Naive thymus-derived CD4-positive, alpha-beta T cell (primary cell): ENCODE measurements at regions of chr1 and their contacts with region 1.

Region 1: DNA sequence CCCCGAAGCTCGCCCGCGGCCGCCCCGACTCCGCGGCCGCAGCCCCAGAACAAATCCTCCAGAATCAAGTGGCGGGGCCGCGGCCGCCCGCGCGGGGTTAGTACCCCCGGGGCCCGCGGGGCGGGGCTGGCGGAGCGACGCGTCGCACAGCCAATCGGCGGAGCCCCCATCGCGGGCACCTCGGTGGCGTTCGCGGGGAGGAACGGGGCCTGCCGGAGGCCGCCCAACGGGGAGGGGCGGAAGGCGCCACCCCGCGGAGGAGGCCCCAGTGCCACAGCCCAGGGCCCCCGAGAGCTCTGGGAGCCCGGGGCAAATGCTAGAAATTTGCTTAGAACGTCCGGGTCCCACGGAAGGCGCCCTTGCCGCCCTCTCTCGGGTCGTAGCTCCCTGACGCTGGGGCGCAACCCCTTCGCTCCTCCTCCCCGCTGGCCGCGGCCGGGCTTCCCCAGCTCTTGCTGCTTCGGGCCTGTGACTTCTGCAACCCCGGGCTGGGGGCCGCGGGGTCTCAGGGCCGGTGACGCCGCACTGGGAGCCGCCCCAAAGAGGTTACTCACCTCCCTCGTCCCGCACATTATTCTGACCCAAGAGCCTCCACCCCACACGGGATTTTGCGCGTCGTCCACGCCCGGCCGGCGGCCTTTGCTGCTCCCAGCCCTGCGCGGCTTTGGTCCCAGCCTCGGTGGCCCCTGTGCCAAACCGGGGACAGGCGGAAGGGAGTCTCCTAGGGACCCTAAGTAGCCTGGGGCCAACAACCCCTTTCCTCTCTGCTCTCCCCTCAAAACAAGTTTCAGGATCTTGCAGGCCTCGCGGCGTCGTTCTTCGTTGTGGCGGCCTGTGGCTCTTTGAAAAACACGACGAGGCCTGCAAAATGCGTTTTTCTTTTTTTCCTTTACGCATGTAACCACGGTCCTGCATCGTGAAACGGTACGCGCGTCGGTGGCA is at the start of gene RUNX3:
- DNase-seq: peak; percentile 87 to 94 (median 92)
- ATAC-seq: peak; percentile 90
- H3K4me3 ChIP-seq: peak within 1 kb of the TSS; percentile 91
- H3K4me3 Mint-ChIP-seq: peak within 1 kb of the TSS; percentile 85 to 98 (median 96)
- H3K27ac ChIP-seq: peak within 1 kb of the TSS; percentile 96
- H3K27ac Mint-ChIP-seq: peak within 1 kb of the TSS; percentile 71 to 98 (median 97)
- H3K4me1 ChIP-seq: peaks cover 37 to 44% of the 10 kb centered on the region in 2 donors
- H3K4me1 Mint-ChIP-seq: peaks cover 21 to 65% (median 51%) of the 10 kb centered on the region in 7 donors
- H3K27me3 ChIP-seq: no peaks in the 10 kb centered on the region
- H3K27me3 Mint-ChIP-seq: no peaks in the 10 kb centered on the region
- total RNA-seq, gene RUNX3: 71.4 to 135 (median 96.9) TPM

Region 2: GRCh38 chr1:23035823-23036452 is 1894.5 kb before region 1 on chr1:
- CTCF ChIA-PET with region 1: no interaction called
- POLR2A ChIA-PET with region 1: no interaction called
- intact Hi-C with region 1: no loop called
- DNase-seq: no peak
- ATAC-seq: no peak
- H3K4me3 ChIP-seq: no peak overlapping the region
- H3K4me3 Mint-ChIP-seq: no peak overlapping the region
- H3K27ac ChIP-seq: no peak overlapping the region
- H3K27ac Mint-ChIP-seq: no peak overlapping the region
- H3K4me1 ChIP-seq: no peaks in the 10 kb centered on the region
- H3K4me1 Mint-ChIP-seq: peaks cover 27 to 80% (median 59%) of the 10 kb centered on the region in 7 donors
- H3K27me3 ChIP-seq: no peaks in the 10 kb centered on the region
- H3K27me3 Mint-ChIP-seq: no peaks in the 10 kb centered on the region

Region 3: DNA sequence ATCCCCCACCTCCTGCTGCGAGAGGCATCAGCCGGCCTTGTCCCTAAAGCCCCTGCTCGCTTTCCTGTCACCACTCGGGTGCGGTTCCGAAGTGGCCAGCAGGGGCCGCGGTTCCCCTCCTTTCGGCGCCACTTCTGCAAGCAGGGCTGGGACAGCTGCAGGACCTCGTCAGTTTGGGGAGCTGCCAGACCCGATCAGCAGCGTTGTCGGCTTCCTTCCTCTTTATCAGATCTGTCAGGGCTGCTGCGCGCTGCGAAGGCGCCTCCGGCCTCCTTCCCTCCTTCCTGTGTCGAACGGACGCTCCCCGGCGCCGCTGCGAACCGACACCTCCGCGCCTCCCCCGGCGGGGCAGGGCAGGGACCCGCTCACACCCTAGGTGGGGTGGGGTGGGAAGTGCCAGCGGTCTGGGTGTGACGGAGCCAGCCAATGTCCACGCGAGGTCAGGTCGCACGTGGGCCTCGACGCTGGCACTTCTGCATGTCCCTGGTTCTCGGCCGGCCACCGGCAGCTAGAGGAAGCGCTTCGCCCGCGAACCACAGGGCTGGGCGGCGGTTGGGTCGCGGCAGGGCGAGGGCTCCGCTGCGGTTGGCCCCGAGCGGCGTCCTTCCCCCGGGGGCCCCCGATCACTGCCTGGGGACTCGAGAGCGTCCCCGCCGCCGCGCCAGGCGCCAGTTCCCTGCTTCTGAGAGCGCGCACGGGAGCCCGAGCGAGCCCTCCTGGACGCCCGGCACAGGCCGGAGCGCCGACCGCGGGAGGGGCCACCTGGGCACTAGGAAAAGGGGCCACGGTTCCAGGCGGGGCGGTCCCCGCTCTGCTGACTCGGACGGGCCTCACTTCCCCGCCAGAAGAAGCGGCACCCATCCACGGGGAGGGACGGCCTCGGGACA is 82.2 kb before region 1 on chr1:
- CTCF ChIA-PET with region 1: interaction called, 28 read pairs
- POLR2A ChIA-PET with region 1: interaction called, 9 read pairs
- intact Hi-C with region 1: loop called (anchors 1 kb)
- DNase-seq: peak; percentile 77 to 91 (median 85)
- ATAC-seq: peak; percentile 94
- H3K4me3 ChIP-seq: peak overlapping the region; percentile 64
- H3K4me3 Mint-ChIP-seq: peak overlapping the region; percentile 72 to 84 (median 79)
- H3K27ac ChIP-seq: peak overlapping the region; percentile 47
- H3K27ac Mint-ChIP-seq: peak overlapping the region; percentile 9 to 80 (median 62)
- H3K4me1 ChIP-seq: peaks cover 7 to 14% of the 10 kb centered on the region in 2 donors
- H3K4me1 Mint-ChIP-seq: peaks cover 0 to 21% (median 11%) of the 10 kb centered on the region in 7 donors
- H3K27me3 ChIP-seq: no peaks in the 10 kb centered on the region
- H3K27me3 Mint-ChIP-seq: peaks cover 0 to 40% (median 0%) of the 10 kb centered on the region in 5 donors

Region 4: GRCh38 chr1:24888971-24889676 is 41.4 kb before region 1 on chr1:
- CTCF ChIA-PET with region 1: no interaction called
- POLR2A ChIA-PET with region 1: no interaction called
- intact Hi-C with region 1: no loop called
- DNase-seq: no peak
- ATAC-seq: no peak
- H3K4me3 ChIP-seq: no peak overlapping the region
- H3K4me3 Mint-ChIP-seq: no peak overlapping the region
- H3K27ac ChIP-seq: no peak overlapping the region
- H3K27ac Mint-ChIP-seq: no peak overlapping the region
- H3K4me1 ChIP-seq: no peaks in the 10 kb centered on the region
- H3K4me1 Mint-ChIP-seq: peaks cover 0 to 3% (median 0%) of the 10 kb centered on the region in 7 donors
- H3K27me3 ChIP-seq: no peaks in the 10 kb centered on the region
- H3K27me3 Mint-ChIP-seq: peaks cover 0 to 31% (median 0%) of the 10 kb centered on the region in 5 donors

Region 5: DNA sequence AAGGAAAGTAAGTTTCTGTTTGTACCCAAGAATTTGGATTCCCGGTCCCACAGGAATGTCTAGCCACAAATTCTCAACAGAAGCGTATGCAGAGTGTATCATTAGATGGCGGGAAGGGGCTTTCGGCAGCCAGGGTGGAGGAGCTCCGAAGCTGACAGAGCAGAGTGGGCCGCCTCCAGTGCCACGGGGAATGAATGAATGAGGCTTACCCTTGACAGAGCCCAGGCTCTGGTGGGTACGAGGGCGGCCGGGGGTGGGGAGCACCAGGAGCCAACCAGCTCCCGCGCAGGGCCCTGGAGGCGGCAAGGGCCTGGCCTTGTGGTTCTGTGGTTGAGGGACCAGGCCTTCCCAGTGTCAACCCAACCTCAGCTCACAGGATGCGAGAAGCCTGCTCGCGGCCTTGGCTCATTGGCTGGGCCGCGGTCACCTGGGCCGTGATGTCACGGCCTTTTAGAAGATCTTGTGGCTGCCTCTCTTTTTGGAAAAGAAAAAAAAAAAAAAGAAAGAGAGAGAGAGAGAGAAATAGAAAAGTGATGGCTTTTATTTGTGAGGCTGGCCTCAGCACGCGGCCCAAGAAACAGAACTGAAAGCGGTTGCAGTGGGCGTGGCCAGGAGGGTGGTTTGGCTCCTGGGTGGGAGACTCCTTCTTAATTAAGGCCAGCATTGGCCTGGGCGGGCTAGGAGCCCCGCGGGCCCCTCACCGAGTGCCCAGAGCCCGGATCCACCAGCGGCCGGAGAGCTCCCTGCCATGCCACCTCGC is 34.5 kb after region 1 on chr1:
- CTCF ChIA-PET with region 1: interaction called, 3 read pairs
- POLR2A ChIA-PET with region 1: interaction called, 18 read pairs
- intact Hi-C with region 1: loop called (anchors 1 kb)
- DNase-seq: peak; percentile 62 to 94 (median 88)
- ATAC-seq: peak; percentile 96
- H3K4me3 ChIP-seq: peak overlapping the region; percentile 65
- H3K4me3 Mint-ChIP-seq: peak overlapping the region; percentile 74 to 92 (median 83)
- H3K27ac ChIP-seq: peak overlapping the region; percentile 74
- H3K27ac Mint-ChIP-seq: peak overlapping the region; percentile 89 to 97 (median 95)
- H3K4me1 ChIP-seq: peaks cover 30 to 39% of the 10 kb centered on the region in 2 donors
- H3K4me1 Mint-ChIP-seq: peaks cover 36 to 85% (median 69%) of the 10 kb centered on the region in 7 donors
- H3K27me3 ChIP-seq: no peaks in the 10 kb centered on the region
- H3K27me3 Mint-ChIP-seq: peaks cover 0 to 3% (median 0%) of the 10 kb centered on the region in 5 donors

Region 6: DNA sequence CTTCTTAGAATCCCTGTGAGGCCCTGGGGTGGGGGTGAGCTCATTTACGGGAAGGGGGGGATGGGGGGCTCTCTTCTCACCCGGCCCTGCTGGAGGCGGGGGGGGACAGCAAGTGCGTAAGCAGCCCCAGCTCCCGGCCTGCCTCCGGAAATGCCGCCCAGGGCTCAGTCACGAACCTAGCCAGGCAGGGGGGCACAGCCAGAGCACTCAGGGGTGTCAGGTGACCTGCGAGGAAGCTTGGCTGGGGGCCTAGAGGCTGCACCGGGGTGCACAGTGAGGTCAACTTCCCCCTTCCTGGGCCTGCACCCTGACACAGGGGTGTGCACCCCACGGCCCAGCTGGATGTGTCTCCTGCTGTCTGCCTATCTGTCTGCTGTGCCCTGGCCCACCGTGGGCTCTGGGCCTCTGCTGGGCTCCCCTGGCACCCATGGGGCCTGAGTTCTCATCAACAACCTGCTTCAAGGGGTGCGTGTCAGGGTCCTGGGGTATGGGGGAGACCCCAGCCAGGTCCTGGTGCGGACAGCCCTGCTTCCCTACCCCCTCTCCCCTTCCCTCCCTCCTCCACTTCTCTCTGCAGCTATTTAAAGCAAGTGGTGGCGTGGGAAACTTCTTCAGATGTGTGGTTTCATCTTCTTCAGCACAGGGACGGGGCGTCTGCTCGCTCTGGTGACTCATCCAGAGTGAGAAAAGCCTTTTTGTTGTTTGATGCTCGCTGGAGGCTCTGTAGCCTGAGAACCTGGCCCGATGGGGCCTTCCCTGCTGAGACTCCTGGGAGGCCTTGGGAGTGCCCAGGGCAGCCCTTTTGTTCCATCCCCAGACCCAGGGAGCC is 92.1 kb after region 1 on chr1:
- CTCF ChIA-PET with region 1: interaction called, 4 read pairs
- POLR2A ChIA-PET with region 1: interaction called, 11 read pairs
- intact Hi-C with region 1: loop called (anchors 1 kb)
- DNase-seq: peak; percentile 80 to 97 (median 91)
- ATAC-seq: peak; percentile 92
- H3K4me3 ChIP-seq: peak overlapping the region; percentile 49
- H3K4me3 Mint-ChIP-seq: peak overlapping the region; percentile 10 to 83 (median 76)
- H3K27ac ChIP-seq: peak overlapping the region; percentile 89
- H3K27ac Mint-ChIP-seq: peak overlapping the region; percentile 91 to 98 (median 96)
- H3K4me1 ChIP-seq: peaks cover 57 to 58% of the 10 kb centered on the region in 2 donors
- H3K4me1 Mint-ChIP-seq: peaks cover 45 to 89% (median 67%) of the 10 kb centered on the region in 7 donors
- H3K27me3 ChIP-seq: no peaks in the 10 kb centered on the region
- H3K27me3 Mint-ChIP-seq: no peaks in the 10 kb centered on the region

Region 7: GRCh38 chr1:25099343-25099951 is 169.0 kb after region 1 on chr1:
- CTCF ChIA-PET with region 1: interaction called, 10 read pairs
- POLR2A ChIA-PET with region 1: interaction called, 5 read pairs
- intact Hi-C with region 1: loop called (anchors 1 to 2 kb)
- DNase-seq: peak in 1 of 9 donors; percentile 46
- ATAC-seq: peak; percentile 49
- H3K4me3 ChIP-seq: no peak overlapping the region
- H3K4me3 Mint-ChIP-seq: peak overlapping the region in 8 of 10 donors; percentile 2 to 77 (median 55)
- H3K27ac ChIP-seq: no peak overlapping the region
- H3K27ac Mint-ChIP-seq: peak overlapping the region in 7 of 9 donors; percentile 6 to 84 (median 61)
- H3K4me1 ChIP-seq: peaks cover 44 to 73% of the 10 kb centered on the region in 2 donors
- H3K4me1 Mint-ChIP-seq: peaks cover 33 to 74% (median 59%) of the 10 kb centered on the region in 7 donors
- H3K27me3 ChIP-seq: no peaks in the 10 kb centered on the region
- H3K27me3 Mint-ChIP-seq: peaks cover 0 to 4% (median 0%) of the 10 kb centered on the region in 5 donors

Region 8: GRCh38 chr1:25675729-25676476 is 745.4 kb after region 1 on chr1:
- CTCF ChIA-PET with region 1: no interaction called
- POLR2A ChIA-PET with region 1: no interaction called
- intact Hi-C with region 1: loop called in 1 of 2 experiments (anchors 5 kb)
- DNase-seq: peak; percentile 24 to 91 (median 86)
- ATAC-seq: peak; percentile 89
- H3K4me3 ChIP-seq: peak overlapping the region; percentile 31
- H3K4me3 Mint-ChIP-seq: peak overlapping the region; percentile 80 to 92 (median 84)
- H3K27ac ChIP-seq: peak overlapping the region; percentile 67
- H3K27ac Mint-ChIP-seq: peak overlapping the region; percentile 70 to 98 (median 94)
- H3K4me1 ChIP-seq: peaks cover 34 to 89% of the 10 kb centered on the region in 2 donors
- H3K4me1 Mint-ChIP-seq: peaks cover 58 to 96% (median 94%) of the 10 kb centered on the region in 7 donors
- H3K27me3 ChIP-seq: no peaks in the 10 kb centered on the region
- H3K27me3 Mint-ChIP-seq: peaks cover 0 to 80% (median 0%) of the 10 kb centered on the region in 5 donors